ENCODE measurements at regions of chr3 and their contacts with region 1.

Region 1: GRCh38 chr3:15557511-15557946 is 36.0 kb upstream of the COLQ start:
- DNase-seq: peak; percentile 57
- ATAC-seq: peak; percentile 96
- H3K4me3 ChIP-seq: no peak overlapping the region
- H3K27ac ChIP-seq: no peak overlapping the region
- H3K4me1 ChIP-seq: no peaks in the 10 kb centered on the region; the same call in 1 of the 2 replicates
- H3K27me3 ChIP-seq: no peaks in the 10 kb centered on the region
- CTCF ChIP-seq: peak; percentile 68

Region 2: DNA sequence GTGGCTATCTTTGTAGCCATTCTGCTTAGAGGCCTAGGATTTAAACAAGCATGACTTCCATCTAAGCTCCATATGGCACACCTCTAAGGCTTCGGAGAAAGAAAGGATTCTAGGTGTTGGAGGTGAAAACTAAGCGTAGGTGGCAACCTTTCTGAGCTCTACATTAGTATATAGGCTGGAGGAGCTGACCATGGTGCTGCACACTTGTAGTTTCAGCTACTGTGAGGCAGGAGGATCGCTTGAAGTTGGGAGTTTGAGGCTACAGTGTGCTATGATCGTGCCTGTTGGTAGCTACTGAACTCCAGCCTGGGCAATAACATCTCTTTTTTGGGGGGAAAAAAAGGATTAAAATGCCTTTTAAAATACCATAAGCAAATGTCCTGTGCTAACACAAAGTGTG is 122.8 kb before region 1 on chr3:
- CTCF ChIA-PET with region 1: no interaction called
- POLR2A ChIA-PET with region 1: no interaction called
- in situ Hi-C with region 1: no loop called
- intact Hi-C with region 1: loop called (anchors 5 kb)
- DNase-seq: no peak
- ATAC-seq: no peak
- H3K4me3 ChIP-seq: no peak overlapping the region
- H3K27ac ChIP-seq: no peak overlapping the region
- H3K4me1 ChIP-seq: no peaks in the 10 kb centered on the region
- H3K27me3 ChIP-seq: no peaks in the 10 kb centered on the region
- CTCF ChIP-seq: no peak

Region 3: GRCh38 chr3:15527031-15527459 is 30.5 kb before region 1 on chr3:
- CTCF ChIA-PET with region 1: no interaction called
- POLR2A ChIA-PET with region 1: no interaction called
- in situ Hi-C with region 1: no loop called
- intact Hi-C with region 1: no loop called
- DNase-seq: no peak
- ATAC-seq: no peak
- H3K4me3 ChIP-seq: no peak overlapping the region
- H3K27ac ChIP-seq: no peak overlapping the region
- H3K4me1 ChIP-seq: no peaks in the 10 kb centered on the region
- H3K27me3 ChIP-seq: no peaks in the 10 kb centered on the region
- CTCF ChIP-seq: no peak

Region 4: DNA sequence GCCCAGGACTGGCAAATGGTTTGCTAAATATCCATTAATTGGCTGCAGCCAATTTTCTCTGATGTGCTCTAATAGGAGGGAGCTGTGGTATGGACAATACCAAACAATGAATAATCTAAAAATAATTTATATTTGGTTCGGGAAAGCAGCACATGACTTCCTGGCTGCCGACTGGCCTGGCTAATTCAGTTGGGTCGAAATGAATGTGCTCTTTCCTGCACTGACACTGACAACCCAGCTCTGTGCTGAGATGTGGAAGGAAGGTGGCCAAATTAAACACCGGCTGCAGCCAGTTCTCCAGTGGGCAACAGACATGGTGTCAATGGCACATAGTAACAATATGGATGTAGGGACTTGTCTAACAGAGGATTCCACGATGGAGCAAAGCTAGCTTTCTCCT is 14.9 kb before region 1 on chr3:
- CTCF ChIA-PET with region 1: no interaction called
- POLR2A ChIA-PET with region 1: no interaction called
- in situ Hi-C with region 1: no loop called
- intact Hi-C with region 1: no loop called
- DNase-seq: no peak
- ATAC-seq: no peak
- H3K4me3 ChIP-seq: no peak overlapping the region
- H3K27ac ChIP-seq: no peak overlapping the region
- H3K4me1 ChIP-seq: no peaks in the 10 kb centered on the region
- H3K27me3 ChIP-seq: no peaks in the 10 kb centered on the region; the same call in 1 of the 2 replicates
- CTCF ChIP-seq: no peak

Region 5: DNA sequence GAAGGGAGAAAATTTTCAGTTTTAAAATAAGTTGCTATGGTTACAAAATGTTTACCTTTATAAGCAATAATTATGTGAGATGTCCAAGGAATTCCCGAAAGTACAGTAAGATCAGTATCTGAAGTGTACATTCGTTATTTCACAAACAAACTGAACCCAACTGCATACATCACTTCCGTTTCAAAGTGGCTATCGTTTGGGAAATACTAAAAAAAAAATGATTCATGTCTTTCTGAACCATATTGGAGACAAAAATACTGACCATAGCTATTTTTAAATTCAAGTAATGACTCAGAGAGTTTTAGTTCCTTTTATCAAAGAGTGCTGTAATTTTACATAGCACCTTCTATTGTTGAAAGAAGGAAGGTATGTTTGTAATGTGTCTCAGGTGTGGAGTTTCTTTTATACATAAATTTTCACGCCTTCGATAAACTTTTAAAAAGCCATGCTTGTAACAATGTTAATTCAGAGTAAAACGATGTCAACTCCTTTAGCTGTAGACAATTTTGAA is 248.3 kb after region 1 on chr3:
- CTCF ChIA-PET with region 1: no interaction called
- POLR2A ChIA-PET with region 1: no interaction called
- in situ Hi-C with region 1: no loop called
- intact Hi-C with region 1: no loop called
- DNase-seq: no peak
- ATAC-seq: no peak; the same call in 1 of the 2 replicates
- H3K4me3 ChIP-seq: no peak overlapping the region
- H3K27ac ChIP-seq: peak overlapping the region; percentile 77
- H3K4me1 ChIP-seq: peaks cover 20% of the 10 kb centered on the region
- H3K27me3 ChIP-seq: no peaks in the 10 kb centered on the region
- CTCF ChIP-seq: no peak

Region 6: DNA sequence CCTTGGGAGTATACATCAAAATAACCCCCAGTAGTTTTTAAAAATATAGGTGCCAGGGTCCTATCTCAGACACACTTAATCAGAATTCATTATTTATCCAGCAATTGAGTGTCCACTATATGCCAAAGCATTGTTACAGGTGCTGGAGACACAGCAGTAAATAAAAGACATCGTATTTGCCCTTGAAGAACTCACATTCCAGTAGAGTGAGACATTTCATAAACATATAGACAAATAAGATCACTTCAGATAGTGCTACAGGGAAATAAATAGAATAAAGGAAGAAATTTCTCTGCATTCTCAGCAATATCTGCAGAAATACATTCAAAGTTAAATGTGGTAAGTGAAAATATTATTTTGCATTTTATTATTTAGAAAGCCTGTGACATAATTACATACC is 274.4 kb after region 1 on chr3:
- CTCF ChIA-PET with region 1: no interaction called
- POLR2A ChIA-PET with region 1: no interaction called
- in situ Hi-C with region 1: no loop called
- intact Hi-C with region 1: no loop called
- DNase-seq: no peak
- ATAC-seq: peak; percentile 76; the same call in 1 of the 2 replicates
- H3K4me3 ChIP-seq: no peak overlapping the region
- H3K27ac ChIP-seq: no peak overlapping the region; the same call in 1 of the 2 replicates
- H3K4me1 ChIP-seq: peaks cover 20% of the 10 kb centered on the region
- H3K27me3 ChIP-seq: no peaks in the 10 kb centered on the region
- CTCF ChIP-seq: no peak

Measured in Panc1 (cell line).